ENCODE measurements at regions of chr9 and their contacts with region 1.

Region 1: DNA sequence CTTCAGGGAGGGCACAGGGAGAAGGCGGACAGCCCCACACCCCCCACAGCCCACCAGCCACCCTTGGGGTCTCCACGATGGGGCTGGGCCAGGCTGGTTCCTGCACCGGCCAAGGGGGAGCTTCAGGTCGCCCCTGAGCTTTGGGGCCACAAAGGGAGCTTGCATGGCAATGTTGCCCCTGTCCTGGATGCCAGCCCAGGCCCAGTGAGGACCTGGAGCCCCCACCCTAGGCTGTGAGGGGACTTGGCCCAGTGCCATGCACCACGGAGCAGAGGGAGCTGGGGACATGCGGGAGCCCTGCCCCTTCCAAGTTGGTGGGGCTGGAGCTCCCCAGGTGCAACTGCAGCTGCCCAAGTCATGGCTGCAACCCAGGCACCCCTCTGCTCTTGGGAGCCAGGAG is 18.4 kb downstream of the TMEM38B start:
- DNase-seq: no peak
- H3K4me3 ChIP-seq: no peak overlapping the region
- H3K27ac ChIP-seq: no peak overlapping the region
- H3K4me1 ChIP-seq: no peaks in the 10 kb centered on the region
- H3K27me3 ChIP-seq: no peaks in the 10 kb centered on the region
- CTCF ChIP-seq: no peak
- EP300 ChIP-seq: no peak
- POLR2A ChIP-seq: no peak

Region 2: GRCh38 chr9:105610381-105610780 is 102.4 kb before region 1 on chr9:
- intact Hi-C with region 1: loop called in 2 of 4 experiments (anchors 10 kb)
- DNase-seq: no peak
- H3K4me3 ChIP-seq: no peak overlapping the region
- H3K27ac ChIP-seq: no peak overlapping the region
- H3K4me1 ChIP-seq: no peaks in the 10 kb centered on the region
- H3K27me3 ChIP-seq: no peaks in the 10 kb centered on the region
- CTCF ChIP-seq: no peak
- EP300 ChIP-seq: no peak
- POLR2A ChIP-seq: no peak

Region 3: GRCh38 chr9:105842023-105842644 is 129.4 kb after region 1 on chr9:
- intact Hi-C with region 1: no loop called
- DNase-seq: no peak
- H3K4me3 ChIP-seq: no peak overlapping the region
- H3K27ac ChIP-seq: no peak overlapping the region
- H3K4me1 ChIP-seq: peaks cover 4% of the 10 kb centered on the region
- H3K27me3 ChIP-seq: no peaks in the 10 kb centered on the region
- CTCF ChIP-seq: no peak
- EP300 ChIP-seq: no peak
- POLR2A ChIP-seq: no peak